Colonic mucosa (tissue), 4 donors: ENCODE measurements at regions of chr13 and their contacts with region 1.

Region 1: GRCh38 chr13:74133657-74134201 is 475 bp downstream of the KLF12 start:
- DNase-seq: peak; percentile 82
- H3K4me3 ChIP-seq: peak overlapping the region; percentile 74
- H3K27ac ChIP-seq: peak overlapping the region; percentile 92
- H3K4me1 ChIP-seq: no peaks in the 10 kb centered on the region
- H3K27me3 ChIP-seq: no peaks in the 10 kb centered on the region
- CTCF ChIP-seq: no peak

Region 2: GRCh38 chr13:73556902-73557301 is 576.8 kb before region 1 on chr13:
- intact Hi-C with region 1: no loop called
- DNase-seq: no peak
- H3K4me3 ChIP-seq: no peak overlapping the region
- H3K27ac ChIP-seq: no peak overlapping the region
- H3K4me1 ChIP-seq: no peaks in the 10 kb centered on the region
- H3K27me3 ChIP-seq: no peaks in the 10 kb centered on the region
- CTCF ChIP-seq: no peak

Region 3: GRCh38 chr13:73765651-73766384 is 367.9 kb before region 1 on chr13:
- intact Hi-C with region 1: loop called (anchors 10 kb)
- DNase-seq: peak; percentile 91
- H3K4me3 ChIP-seq: no peak overlapping the region
- H3K27ac ChIP-seq: peak overlapping the region; percentile 45
- H3K4me1 ChIP-seq: peaks cover 4% of the 10 kb centered on the region
- H3K27me3 ChIP-seq: no peaks in the 10 kb centered on the region
- CTCF ChIP-seq: no peak

Region 4: DNA sequence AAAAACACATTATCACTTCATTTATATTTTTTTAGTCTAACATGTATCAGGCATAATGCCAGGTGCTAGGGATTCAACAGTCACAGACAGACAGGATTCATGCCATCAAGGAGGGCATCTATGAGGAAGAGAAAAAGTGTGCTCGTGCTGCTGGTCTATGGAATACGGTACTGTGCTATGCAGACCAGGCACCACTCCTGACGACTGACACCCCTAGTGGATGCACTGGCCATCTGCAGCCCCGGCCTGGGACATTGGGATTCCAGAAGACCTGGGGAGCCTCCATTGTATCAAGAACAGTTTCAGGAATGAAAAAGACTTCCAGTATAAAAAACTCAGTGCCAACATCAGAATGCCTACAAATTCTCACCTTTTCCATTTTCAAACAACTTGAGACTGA is 93.5 kb before region 1 on chr13:
- intact Hi-C with region 1: loop called (anchors 10 kb)
- DNase-seq: peak; percentile 62
- H3K4me3 ChIP-seq: no peak overlapping the region
- H3K27ac ChIP-seq: no peak overlapping the region
- H3K4me1 ChIP-seq: no peaks in the 10 kb centered on the region
- H3K27me3 ChIP-seq: no peaks in the 10 kb centered on the region
- CTCF ChIP-seq: peak; percentile 37

Region 5: GRCh38 chr13:74287724-74288169 is 154.0 kb after region 1 on chr13:
- intact Hi-C with region 1: loop called (anchors 10 kb)
- DNase-seq: peak; percentile 79
- H3K4me3 ChIP-seq: no peak overlapping the region
- H3K27ac ChIP-seq: no peak overlapping the region
- H3K4me1 ChIP-seq: peaks cover 15% of the 10 kb centered on the region
- H3K27me3 ChIP-seq: no peaks in the 10 kb centered on the region
- CTCF ChIP-seq: no peak